WTC11 (cell line): ENCODE measurements at regions of chr10 and their contacts with region 1.

Region 1: DNA sequence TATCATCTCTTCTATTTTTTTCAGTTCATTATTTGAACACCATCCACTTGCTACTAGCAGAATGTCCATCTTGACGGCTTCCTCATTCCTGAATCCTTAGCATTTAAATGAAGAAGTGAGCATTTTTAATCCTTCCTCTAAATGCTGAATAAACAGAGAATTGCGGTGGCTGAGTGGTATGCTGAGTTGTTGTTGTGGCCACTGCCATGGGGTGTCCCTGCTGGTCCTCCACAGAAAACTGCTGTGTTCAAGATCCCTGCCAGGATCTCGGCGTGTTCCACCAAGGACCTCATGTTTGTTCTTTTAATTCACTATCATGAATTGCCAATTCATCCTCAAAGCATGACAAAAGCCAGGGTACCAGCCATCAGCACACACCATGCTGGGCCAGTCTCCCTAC is 48.9 kb upstream of the HABP2 start:
- DNase-seq: no peak
- ATAC-seq: no peak
- H3K4me3 Mint-ChIP-seq: no peak overlapping the region
- H3K27ac Mint-ChIP-seq: no peak overlapping the region
- H3K4me1 Mint-ChIP-seq: no peaks in the 10 kb centered on the region
- H3K27me3 Mint-ChIP-seq: peaks cover 3% of the 10 kb centered on the region; the same call in 1 of the 2 replicates
- CTCF ChIP-seq: no peak

Region 2: DNA sequence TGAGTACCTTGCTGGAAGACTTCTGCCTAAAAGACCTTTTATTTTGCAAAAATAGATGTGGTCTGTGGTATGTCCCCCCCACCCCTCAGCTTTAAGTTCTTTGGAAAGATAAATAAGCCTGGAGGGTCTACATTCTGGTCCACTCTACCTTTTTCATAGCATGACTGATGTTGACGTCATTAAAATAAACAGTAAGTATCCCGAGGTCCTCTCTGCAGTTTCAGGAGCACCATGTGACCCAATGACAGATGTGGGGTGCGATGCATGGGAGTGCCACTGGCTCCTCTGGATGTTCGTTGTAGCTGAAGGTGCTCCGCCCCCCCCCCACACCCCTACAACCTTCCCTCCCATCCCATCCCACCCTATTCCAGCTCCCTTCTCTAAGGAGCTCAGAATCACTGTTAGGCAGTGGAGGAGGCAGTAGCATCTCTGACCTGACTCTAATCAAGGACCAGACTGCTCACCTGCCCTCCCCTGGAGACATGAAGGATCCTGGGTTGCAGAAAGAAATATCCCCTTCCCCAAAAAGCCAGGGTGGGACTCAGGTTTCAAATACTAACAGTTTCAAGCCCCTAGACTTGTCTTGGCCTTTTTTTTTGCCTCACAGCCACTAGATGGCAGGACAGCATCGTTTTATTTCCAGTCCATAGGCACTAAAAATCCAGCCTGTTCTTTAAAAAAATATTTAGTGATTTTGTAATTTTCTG is 200.9 kb after region 1 on chr10:
- CTCF ChIA-PET with region 1: no interaction called
- POLR2A ChIA-PET with region 1: interaction called, 11 read pairs
- DNase-seq: no peak
- ATAC-seq: peak; percentile 69
- H3K4me3 Mint-ChIP-seq: no peak overlapping the region
- H3K27ac Mint-ChIP-seq: no peak overlapping the region
- H3K4me1 Mint-ChIP-seq: peaks cover 41% of the 10 kb centered on the region
- H3K27me3 Mint-ChIP-seq: no peaks in the 10 kb centered on the region
- CTCF ChIP-seq: no peak